Esophagus muscularis mucosa (tissue), 4 donors: ENCODE measurements at regions of chr16 and their contacts with region 1.

Region 1: DNA sequence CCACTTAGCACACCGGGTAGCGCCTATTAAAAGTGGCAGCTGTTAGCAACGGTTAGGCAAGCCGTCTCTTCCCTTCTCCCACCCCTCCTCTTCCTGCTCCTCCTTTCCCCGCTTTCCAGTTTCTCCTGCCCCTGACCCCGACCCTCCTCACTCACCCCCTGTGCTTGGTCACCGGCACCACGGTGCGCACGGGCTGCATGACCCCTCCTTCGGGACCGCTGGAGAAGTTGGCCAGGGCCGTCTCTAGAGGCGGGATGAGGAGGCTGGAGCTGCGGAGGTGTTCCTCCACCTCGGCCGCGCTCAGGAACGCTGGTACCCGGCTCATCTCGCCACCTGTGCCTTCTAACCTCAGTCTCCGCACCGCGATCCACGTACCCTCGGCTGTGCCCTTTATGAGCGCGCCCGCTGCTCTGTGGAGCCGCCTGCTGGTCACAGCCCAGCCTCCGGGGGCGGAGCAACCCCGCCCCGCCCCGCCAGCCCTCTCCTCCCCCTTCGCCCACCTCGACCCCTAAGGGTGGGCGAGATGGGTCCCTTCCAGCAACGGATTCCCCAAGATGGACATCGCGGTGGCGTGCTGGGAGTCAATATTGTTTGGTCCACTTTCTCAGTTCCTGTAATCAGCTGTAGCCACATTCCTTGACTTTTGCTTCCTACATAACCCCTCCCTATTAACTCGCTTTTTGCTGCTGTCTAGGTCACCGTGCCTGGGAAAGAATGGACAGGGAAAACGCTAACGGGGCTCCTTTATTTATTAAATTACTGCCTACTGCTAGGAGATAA is at the start of gene CRYM:
- DNase-seq: peak; percentile 72
- H3K4me3 ChIP-seq: peak within 1 kb of the TSS; percentile 48 to 61 (median 50)
- H3K27ac ChIP-seq: no peak within 1 kb of the TSS
- H3K4me1 ChIP-seq: peaks cover 5 to 12% (median 11%) of the 10 kb centered on the region in 4 donors
- H3K27me3 ChIP-seq: peaks cover 0 to 51% (median 0%) of the 10 kb centered on the region in 4 donors
- CTCF ChIP-seq: peak; percentile 68 to 88 (median 75)
- EP300 ChIP-seq: no peak
- POLR2A ChIP-seq: no peak
- total RNA-seq, gene CRYM: 1.0 to 1.2 TPM in 2 of 4 donors, not detected in the others

Region 2: DNA sequence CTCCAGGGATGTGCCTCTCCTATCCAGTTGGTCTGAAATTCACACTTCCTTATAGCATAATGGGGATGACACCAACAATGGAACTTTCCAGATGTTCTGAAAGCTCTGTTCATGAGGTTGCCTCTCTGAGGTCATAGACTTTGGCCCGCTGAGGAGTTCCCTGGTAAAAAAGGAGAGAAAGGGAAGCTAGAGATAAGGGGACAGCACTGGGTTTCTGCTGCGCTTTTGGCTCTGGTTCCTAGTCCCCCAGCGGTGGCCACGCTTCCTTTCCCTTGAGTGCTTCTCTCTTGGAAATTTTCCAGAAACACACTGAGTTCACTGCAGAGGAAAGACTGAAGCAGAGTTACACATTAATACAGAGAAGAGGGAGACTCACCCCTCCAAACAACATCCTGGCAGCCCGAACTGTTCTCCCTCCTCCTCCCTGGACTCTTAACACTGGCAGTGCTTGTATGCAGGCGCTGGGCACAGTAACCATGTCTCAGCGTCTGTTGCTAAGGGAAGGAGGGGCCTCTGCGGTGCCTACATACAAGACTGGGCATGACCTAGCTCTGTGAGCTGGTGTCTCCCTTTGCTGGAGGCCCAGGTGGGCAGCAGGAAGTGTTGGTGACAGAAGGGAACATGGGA is 127.6 kb before region 1 on chr16 and contains the start of gene DNAH3:
- intact Hi-C with region 1: loop called (anchors 5 kb)
- DNase-seq: no peak
- H3K4me3 ChIP-seq: no peak within 1 kb of the TSS
- H3K27ac ChIP-seq: no peak within 1 kb of the TSS
- H3K4me1 ChIP-seq: peaks cover 0 to 2% (median 0%) of the 10 kb centered on the region in 4 donors
- H3K27me3 ChIP-seq: peaks cover 0 to 15% (median 0%) of the 10 kb centered on the region in 4 donors
- CTCF ChIP-seq: no peak
- EP300 ChIP-seq: no peak
- POLR2A ChIP-seq: no peak
- total RNA-seq, gene DNAH3: under 0.01 to 0.13 TPM in 2 of 4 donors, not detected in the others

Region 3: GRCh38 chr16:21184834-21185233 is 93.3 kb before region 1 on chr16:
- intact Hi-C with region 1: loop called (anchors 5 kb)
- DNase-seq: no peak
- H3K4me3 ChIP-seq: no peak overlapping the region
- H3K27ac ChIP-seq: no peak overlapping the region
- H3K4me1 ChIP-seq: peaks cover 0 to 9% (median 7%) of the 10 kb centered on the region in 4 donors
- H3K27me3 ChIP-seq: no peaks in the 10 kb centered on the region
- CTCF ChIP-seq: no peak
- EP300 ChIP-seq: no peak
- POLR2A ChIP-seq: no peak